Common myeloid progenitor, CD34-positive (primary cell): ENCODE measurements at regions of chr1 and their contacts with region 1.

Region 1: DNA sequence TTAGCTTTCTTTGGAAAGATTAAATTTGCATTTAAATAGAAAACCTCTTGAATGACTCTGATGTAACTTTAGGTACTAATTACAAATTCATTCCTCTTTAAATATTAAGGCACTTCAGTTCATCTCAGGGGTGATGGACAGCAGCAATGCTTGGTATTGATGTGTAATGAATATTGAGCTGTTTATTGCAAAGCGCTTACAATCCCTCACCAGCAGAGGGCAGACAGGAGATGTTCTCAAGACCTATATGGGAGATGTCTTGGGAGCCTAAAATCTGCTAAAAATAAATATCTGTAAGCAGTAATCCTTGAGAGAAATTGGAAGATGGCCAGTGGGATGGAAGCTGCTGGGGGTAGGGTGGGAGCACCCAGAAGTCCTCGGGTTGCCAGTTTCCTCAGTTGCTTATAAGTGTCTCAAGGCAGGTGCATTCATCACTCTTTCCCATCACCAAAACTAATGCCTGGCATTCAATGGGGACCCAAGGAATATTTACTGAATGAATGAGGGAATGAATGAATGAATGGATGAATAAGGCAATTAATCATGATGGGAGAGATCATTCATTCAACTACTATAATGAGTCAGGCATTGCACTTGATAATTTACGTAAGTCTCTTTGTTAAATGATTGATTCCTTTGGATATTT is 2.3 kb downstream of the KLHDC8A start:
- DNase-seq: peak; percentile 68 to 85 (median 78)
- H3K4me3 ChIP-seq: no peak overlapping the region
- H3K27ac ChIP-seq: no peak overlapping the region
- H3K4me1 ChIP-seq: no peaks in the 10 kb centered on the region
- H3K27me3 ChIP-seq: peaks cover 0 to 13% (median 2%) of the 10 kb centered on the region in 5 experiments

Region 2: DNA sequence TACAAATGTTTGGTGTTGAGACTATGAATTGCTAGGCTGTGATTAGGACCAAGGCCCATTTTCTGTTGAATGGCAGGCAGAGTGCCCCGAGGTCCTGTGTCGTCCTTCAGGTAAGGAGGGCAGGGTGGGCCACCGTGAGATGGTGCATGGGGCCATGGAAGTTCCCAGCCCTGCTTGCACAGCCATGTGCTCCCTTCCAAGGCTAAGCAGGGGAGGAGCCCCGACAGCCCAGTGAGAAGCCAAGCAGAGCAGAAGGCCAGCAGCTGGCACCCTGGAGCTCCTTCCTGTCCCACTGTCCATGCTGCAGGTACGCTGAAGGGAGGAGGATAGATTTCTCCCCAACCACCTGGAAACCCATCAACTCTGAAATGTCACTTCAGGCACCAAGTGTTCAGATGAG is 24.7 kb before region 1 on chr1:
- CTCF ChIA-PET with region 1: interaction called, 33 read pairs
- POLR2A ChIA-PET with region 1: no interaction called
- DNase-seq: no peak
- H3K4me3 ChIP-seq: no peak overlapping the region
- H3K27ac ChIP-seq: no peak overlapping the region
- H3K4me1 ChIP-seq: no peaks in the 10 kb centered on the region
- H3K27me3 ChIP-seq: peaks cover 0 to 31% (median 0%) of the 10 kb centered on the region in 5 experiments